ENCODE measurements at regions of chr2 and their contacts with region 1.

Region 1: GRCh38 chr2:219498280-219499057 is at the start of gene GMPPA:
- DNase-seq: peak; percentile 98
- ATAC-seq: peak; percentile 94
- H3K4me3 ChIP-seq: peak within 1 kb of the TSS; percentile 71 to 95
- H3K27ac ChIP-seq: peak within 1 kb of the TSS; percentile 96
- H3K4me1 ChIP-seq: peaks cover 15% of the 10 kb centered on the region
- H3K27me3 ChIP-seq: no peaks in the 10 kb centered on the region
- CTCF ChIP-seq: no peak
- total RNA-seq, gene GMPPA: 66.2 TPM

Region 2: DNA sequence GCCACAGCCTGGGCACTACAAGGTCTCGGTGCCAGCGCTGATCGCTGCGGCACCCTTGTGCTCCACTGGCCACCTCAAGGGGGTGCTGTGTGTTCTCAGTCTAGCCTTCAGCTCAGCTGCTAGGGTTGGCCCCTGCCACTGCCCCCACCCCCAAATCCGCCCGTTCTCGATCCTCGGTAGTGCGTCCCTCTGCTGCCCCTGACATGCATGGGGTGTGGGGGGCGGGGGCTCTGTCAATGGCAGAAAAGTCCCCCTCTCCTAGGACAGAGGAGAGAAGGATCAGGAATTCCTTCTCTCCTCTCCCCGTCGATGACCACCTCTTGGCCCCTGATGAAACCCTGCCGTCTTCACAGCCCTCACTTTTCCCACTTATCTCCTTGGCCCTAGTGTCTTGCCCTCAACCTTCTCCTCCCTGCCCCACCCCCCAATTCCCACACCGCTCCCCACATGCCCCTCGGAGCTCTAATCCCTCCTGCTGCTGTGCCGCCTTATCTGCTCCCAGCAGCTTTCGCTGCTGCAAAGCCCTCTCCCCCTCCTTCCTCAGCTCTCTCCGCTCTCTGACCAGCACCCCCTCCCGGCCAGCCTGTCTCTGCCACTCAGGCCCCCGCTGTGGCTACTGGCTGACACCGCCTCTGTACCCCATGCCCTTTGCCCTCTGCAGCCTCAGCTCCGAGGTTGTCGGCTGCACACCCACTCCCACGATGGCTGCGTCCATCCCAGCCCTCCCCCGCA is 11.5 kb after region 1 on chr2:
- CTCF ChIA-PET with region 1: interaction called, 27 read pairs
- POLR2A ChIA-PET with region 1: interaction called, 3 read pairs
- in situ Hi-C with region 1: no loop called
- intact Hi-C with region 1: no loop called
- DNase-seq: no peak
- ATAC-seq: peak; percentile 91
- H3K4me3 ChIP-seq: peak overlapping the region; percentile 33 to 49
- H3K27ac ChIP-seq: no peak overlapping the region
- H3K4me1 ChIP-seq: peaks cover 22% of the 10 kb centered on the region
- H3K27me3 ChIP-seq: no peaks in the 10 kb centered on the region; the same call in 1 of the 2 replicates
- CTCF ChIP-seq: peak; percentile 94

Region 3: GRCh38 chr2:219627103-219628100 is 128.9 kb after region 1 on chr2 and contains the start of gene SLC4A3:
- CTCF ChIA-PET with region 1: no interaction called
- POLR2A ChIA-PET with region 1: interaction called, 11 read pairs
- in situ Hi-C with region 1: no loop called
- intact Hi-C with region 1: no loop called
- DNase-seq: no peak
- ATAC-seq: peak; percentile 83
- H3K4me3 ChIP-seq: peak within 1 kb of the TSS; percentile 49 to 56
- H3K27ac ChIP-seq: peak within 1 kb of the TSS; percentile 72
- H3K4me1 ChIP-seq: peaks cover 5% of the 10 kb centered on the region
- H3K27me3 ChIP-seq: no peaks in the 10 kb centered on the region
- CTCF ChIP-seq: no peak
- total RNA-seq, gene SLC4A3: 13.5 TPM